PC-3 (cell line): ENCODE measurements at regions of chr5 and their contacts with region 1.

Region 1: DNA sequence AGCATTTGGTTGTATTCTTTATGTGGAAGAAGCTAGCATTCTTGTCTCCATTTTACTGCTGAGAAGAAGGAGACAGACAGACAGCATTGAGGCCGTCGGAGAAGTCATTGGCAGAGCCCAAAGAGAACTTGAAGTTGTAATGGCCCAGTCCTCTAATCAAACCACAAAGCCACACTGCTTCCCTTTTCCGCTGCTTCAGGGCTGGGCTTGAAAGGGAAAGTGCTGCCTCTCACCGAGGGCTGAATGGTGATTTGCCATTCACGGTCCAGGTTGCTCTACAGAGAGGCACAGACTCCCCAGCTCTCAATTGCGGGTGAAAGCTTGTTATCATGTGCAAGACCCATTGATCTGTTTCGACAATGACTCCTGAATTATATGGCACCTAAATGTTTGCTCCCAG is 25.6 kb upstream of the POU4F3 start:
- DNase-seq: no peak
- ATAC-seq: no peak
- H3K4me3 ChIP-seq: no peak overlapping the region
- H3K27ac ChIP-seq: no peak overlapping the region
- H3K4me1 ChIP-seq: peaks cover 3% of the 10 kb centered on the region; the same call in 1 of the 2 replicates
- H3K27me3 ChIP-seq: peaks cover 5% of the 10 kb centered on the region; the same call in 1 of the 2 replicates
- CTCF ChIP-seq: no peak

Region 2: DNA sequence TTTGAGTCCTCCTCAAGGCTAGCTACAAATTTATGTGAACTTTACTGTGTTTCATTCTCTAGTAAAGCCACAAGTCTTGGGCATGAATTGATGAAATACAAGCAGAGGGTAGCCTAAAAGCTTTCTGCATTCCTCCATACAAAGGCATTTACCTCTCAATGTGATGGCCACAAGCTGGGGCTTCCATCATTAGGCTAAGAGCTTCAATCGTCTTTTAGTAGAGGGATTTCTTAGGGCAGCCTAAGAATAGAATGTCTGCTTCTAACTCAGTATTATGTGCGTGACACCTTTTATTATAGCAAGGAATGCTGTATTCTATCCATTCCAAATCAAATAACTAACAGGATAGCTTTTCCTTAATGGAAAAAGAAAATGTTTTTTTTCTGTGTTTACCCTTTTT is 211.4 kb before region 1 on chr5:
- CTCF ChIA-PET with region 1: no interaction called
- POLR2A ChIA-PET with region 1: interaction called, 11 read pairs
- intact Hi-C with region 1: no loop called
- DNase-seq: no peak
- ATAC-seq: no peak
- H3K4me3 ChIP-seq: no peak overlapping the region
- H3K27ac ChIP-seq: no peak overlapping the region
- H3K4me1 ChIP-seq: no peaks in the 10 kb centered on the region
- H3K27me3 ChIP-seq: no peaks in the 10 kb centered on the region
- CTCF ChIP-seq: no peak

Region 3: GRCh38 chr5:146327222-146327853 is 14.3 kb after region 1 on chr5:
- CTCF ChIA-PET with region 1: interaction called, 14 read pairs
- POLR2A ChIA-PET with region 1: no interaction called
- intact Hi-C with region 1: no loop called
- DNase-seq: peak; percentile 37
- ATAC-seq: no peak
- H3K4me3 ChIP-seq: no peak overlapping the region
- H3K27ac ChIP-seq: no peak overlapping the region
- H3K4me1 ChIP-seq: no peaks in the 10 kb centered on the region
- H3K27me3 ChIP-seq: 0 out of 2 replicates have a peak, but pooled peaks cover 15% of the 10 kb centered on the region
- CTCF ChIP-seq: no peak